AG04450 (cell line): ENCODE measurements at regions of chr15 and their contacts with region 1.

Region 1: DNA sequence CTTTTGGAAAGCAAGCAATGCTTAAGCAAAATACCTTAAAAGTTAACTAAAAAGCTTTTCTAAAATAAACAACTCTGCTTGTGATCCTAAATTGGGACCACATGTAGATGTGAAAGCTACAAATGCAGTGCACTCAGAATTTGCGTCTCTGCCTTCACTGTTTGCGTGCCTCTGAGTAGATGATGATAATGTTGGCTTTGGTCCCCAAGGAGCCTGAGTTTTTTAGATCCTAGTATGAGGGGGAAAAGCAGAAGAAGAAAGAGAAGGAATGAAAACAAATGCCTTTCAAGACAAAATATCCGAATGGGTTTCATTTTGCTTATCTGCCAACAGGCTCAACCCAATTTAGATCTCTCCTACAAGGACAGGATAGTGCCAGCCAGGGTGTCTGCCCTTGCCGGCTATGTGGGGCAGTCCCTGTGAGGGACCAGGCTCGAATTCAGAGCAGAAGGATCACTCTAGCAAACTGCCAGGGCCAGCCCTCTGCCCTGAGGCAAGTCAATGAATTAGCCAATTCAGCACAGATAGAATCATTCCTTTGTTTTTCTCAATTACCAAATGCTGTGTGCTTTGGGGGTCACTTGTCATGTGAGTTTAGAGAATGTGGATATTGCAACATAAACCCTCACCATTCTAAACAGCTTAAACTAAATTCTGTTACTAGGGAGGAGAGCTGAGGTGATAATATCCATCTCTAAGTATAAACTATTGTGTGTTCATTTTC is 28.5 kb downstream of the SCG5 start:
- DNase-seq: no peak
- H3K4me3 ChIP-seq: no peak overlapping the region
- H3K27ac ChIP-seq: no peak overlapping the region
- H3K27me3 ChIP-seq: no peaks in the 10 kb centered on the region
- CTCF ChIP-seq: no peak

Region 2: DNA sequence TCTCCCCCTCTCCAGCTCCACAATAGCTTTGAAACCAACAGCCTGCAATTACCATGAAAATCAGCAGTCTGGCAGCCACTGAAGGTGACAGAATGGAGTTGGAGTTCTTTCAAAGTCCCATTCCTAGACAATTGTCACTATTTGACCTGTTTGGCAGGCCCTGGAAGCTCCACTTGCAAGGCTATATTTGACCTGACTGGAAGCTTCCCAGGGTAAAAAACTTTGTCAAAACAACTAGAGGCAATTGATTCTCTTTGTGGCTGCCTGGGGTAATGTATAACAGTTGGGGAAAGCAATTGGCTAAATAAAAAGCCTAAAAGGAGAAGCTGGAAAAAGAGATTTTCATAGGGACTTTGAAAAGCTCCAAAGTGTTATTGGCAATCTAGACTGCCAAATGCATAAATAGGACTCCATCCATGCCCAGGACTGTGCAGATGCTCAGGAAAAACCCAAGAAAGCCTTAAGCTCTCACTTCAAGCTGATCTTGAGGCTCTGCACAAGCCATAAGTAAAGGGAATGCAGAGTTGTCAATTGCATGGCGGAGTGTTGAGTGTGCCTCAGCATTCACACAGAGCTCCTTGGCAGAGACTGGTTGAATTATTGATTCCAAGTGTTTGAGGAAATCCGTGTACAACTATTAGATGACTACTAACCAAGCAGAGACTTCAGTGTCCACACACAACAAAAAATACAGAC is 66.1 kb after region 1 on chr15:
- CTCF ChIA-PET with region 1: interaction called, 12 read pairs
- POLR2A ChIA-PET with region 1: interaction called, 8 read pairs
- DNase-seq: no peak
- H3K4me3 ChIP-seq: no peak overlapping the region
- H3K27ac ChIP-seq: no peak overlapping the region
- H3K27me3 ChIP-seq: no peaks in the 10 kb centered on the region
- CTCF ChIP-seq: no peak